ENCODE measurements at regions of chr2 and their contacts with region 1.

Region 1: DNA sequence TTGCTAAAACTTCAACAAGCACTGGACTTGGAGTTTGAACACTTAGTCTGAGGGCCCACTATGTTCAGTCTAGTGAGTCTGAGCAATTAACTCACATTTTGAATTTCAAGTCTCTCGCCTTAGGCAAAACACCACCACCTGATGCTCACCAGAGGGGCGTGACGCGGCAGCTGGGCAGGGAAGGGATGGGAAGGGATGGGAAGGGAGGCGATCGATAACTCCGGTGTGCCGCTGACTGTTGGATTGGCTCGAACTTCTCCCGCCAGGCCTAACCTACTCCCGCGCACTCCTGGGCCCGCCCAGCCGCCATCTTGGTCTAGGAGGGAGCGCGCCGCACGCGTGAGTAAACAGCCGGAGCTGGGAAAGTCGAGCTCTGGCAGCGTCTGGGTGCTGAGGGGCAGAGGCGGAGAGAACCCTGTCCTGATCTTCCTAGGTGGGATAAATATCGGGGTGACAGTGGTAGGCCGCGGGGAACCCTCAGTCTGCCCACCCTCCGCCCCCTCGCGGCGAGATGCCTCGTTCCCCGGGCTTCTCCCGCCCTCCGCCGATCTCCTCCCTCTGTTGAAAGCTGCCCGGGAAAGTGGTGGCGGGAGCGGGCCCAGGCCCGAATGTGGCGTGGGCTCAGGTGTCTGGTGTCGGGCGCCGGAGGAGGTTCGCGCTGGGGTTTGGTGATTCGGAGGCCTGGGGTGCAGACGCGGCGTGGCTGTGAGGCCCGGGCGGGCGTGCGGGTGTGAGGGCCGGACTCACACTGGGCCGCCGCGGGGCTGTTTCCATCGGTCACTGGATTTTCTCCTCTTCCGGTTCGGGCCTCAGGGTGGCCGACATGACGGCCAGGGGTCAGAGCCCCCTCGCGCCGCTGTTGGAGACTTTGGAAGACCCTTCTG is at the start of gene RIF1:
- DNase-seq: peak; percentile 73
- H3K4me3 ChIP-seq: peak within 1 kb of the TSS; percentile 96
- H3K27ac ChIP-seq: peak within 1 kb of the TSS; percentile 90
- H3K27me3 ChIP-seq: no peaks in the 10 kb centered on the region
- CTCF ChIP-seq: peak; percentile 71
- polyA plus RNA-seq, gene RIF1: 10.2 and 15.0 TPM in 2 replicates

Region 2: GRCh38 chr2:151363709-151364108 is 46.1 kb before region 1 on chr2:
- CTCF ChIA-PET with region 1: interaction called, 11 read pairs
- POLR2A ChIA-PET with region 1: interaction called, 5 read pairs
- DNase-seq: no peak
- H3K4me3 ChIP-seq: no peak overlapping the region
- H3K27ac ChIP-seq: no peak overlapping the region
- H3K27me3 ChIP-seq: no peaks in the 10 kb centered on the region
- CTCF ChIP-seq: no peak

Region 3: GRCh38 chr2:151459358-151459757 is 49.5 kb after region 1 on chr2:
- CTCF ChIA-PET with region 1: no interaction called
- POLR2A ChIA-PET with region 1: no interaction called
- DNase-seq: no peak
- H3K4me3 ChIP-seq: no peak overlapping the region
- H3K27ac ChIP-seq: no peak overlapping the region
- H3K27me3 ChIP-seq: no peaks in the 10 kb centered on the region
- CTCF ChIP-seq: no peak

Region 4: DNA sequence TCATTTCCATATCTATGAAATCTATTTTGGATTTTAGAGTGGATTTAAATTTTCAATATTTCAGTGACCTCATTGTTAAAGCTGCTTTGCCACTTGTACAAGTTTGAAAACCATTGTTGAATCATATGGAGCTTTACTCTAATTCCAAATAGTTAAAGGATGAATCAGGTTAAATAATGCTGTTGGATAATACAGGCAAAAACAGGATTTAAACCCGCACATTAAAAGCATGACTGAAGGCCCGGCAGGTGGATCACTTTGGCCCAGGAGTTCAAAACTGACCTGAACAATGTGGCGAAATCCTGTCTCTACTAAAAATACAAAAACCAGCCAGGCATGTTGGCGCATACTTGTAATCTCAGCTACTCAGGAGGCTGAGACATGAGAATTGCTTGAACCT is 68.2 kb after region 1 on chr2:
- CTCF ChIA-PET with region 1: no interaction called
- POLR2A ChIA-PET with region 1: no interaction called
- DNase-seq: peak; percentile 7
- H3K4me3 ChIP-seq: no peak overlapping the region
- H3K27ac ChIP-seq: no peak overlapping the region
- H3K27me3 ChIP-seq: no peaks in the 10 kb centered on the region
- CTCF ChIP-seq: no peak

Region 5: DNA sequence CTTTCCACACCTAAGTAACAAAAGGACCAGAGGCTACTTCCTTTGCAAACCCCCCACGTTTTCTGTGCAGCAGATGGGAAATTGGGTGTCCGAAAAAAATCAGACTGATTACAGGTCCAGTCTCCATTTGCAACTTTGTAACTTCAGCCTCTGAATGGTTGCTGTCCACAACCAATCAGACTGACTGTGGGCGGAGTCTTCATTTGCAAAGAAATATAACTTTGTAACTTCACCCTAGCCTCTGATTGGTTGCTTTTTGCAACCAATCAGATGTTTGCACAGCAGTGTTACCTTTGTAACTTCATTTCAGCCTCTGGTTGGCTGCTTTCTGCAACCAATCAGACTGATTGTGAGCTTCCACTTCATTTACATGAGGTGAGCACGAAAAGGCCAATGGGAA is 716.8 kb after region 1 on chr2:
- CTCF ChIA-PET with region 1: no interaction called
- POLR2A ChIA-PET with region 1: no interaction called
- DNase-seq: no peak
- H3K4me3 ChIP-seq: no peak overlapping the region
- H3K27ac ChIP-seq: no peak overlapping the region
- H3K27me3 ChIP-seq: no peaks in the 10 kb centered on the region
- CTCF ChIP-seq: no peak